H1 (cell line): ENCODE measurements at regions of chr4 and their contacts with region 1.

Region 1: DNA sequence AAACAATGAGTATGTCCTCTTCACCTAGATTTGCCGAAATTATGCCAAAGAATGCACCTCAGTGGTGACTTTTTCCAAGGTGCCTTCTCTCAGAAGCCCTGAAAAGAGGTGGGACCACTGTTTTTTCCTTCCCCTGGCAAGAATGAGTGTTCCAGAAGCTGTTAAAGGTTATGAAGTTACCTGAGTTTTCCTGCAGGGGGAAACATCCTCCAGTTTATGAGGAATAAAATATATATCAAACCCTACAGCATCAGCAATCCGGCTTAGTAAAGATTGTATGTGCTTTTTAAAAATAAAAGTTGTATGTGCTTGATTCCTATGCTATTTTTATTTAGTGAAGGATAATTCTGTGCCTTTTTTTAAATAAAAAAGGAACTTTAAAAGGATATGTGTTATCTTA is 73.3 kb downstream of the RBM46 start:
- DNase-seq: no peak
- H3K4me3 ChIP-seq: no peak overlapping the region
- H3K27ac ChIP-seq: no peak overlapping the region
- H3K4me1 ChIP-seq: no peaks in the 10 kb centered on the region
- H3K27me3 ChIP-seq: no peaks in the 10 kb centered on the region
- CTCF ChIP-seq: peak in 2 of 3 experiments; percentile 37 to 55; a peak in 2 of 4 replicates
- EP300 ChIP-seq: no peak
- POLR2A ChIP-seq: no peak
- RAD21 ChIP-seq: peak; percentile 59 to 60

Region 2: GRCh38 chr4:154838694-154839093 is 15.7 kb before region 1 on chr4:
- CTCF ChIA-PET with region 1: interaction called, 13 read pairs
- POLR2A ChIA-PET with region 1: no interaction called
- DNase-seq: no peak
- H3K4me3 ChIP-seq: no peak overlapping the region
- H3K27ac ChIP-seq: no peak overlapping the region
- H3K4me1 ChIP-seq: peaks cover 0 to 4% (median 2%) of the 10 kb centered on the region in 4 experiments; a peak in 3 of 7 replicates
- H3K27me3 ChIP-seq: no peaks in the 10 kb centered on the region
- CTCF ChIP-seq: no peak
- EP300 ChIP-seq: no peak
- POLR2A ChIP-seq: no peak
- RAD21 ChIP-seq: no peak

Region 3: DNA sequence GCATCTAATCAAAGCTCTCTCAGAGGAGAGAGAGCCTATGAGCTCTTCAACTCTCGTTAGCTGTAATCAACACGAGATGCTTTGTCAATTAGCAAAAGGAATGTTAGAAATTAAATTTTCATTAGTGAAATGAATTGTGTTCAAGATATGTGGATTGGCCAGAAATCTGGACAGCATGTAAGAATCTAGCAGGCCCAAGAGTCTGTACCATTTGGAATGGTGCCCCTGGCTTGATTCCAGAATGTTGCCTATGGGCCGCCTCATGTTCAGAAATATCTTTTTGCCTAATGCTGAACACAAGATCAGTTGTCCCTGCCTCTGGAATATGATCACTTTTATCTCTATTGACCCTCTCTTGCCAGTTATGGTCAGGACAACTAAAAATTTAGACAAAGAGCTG is 14.9 kb after region 1 on chr4:
- CTCF ChIA-PET with region 1: interaction called, 27 read pairs
- POLR2A ChIA-PET with region 1: no interaction called
- DNase-seq: no peak
- H3K4me3 ChIP-seq: no peak overlapping the region
- H3K27ac ChIP-seq: no peak overlapping the region
- H3K4me1 ChIP-seq: peaks cover 0 to 7% (median 4%) of the 10 kb centered on the region in 4 experiments; a peak in 5 of 7 replicates
- H3K27me3 ChIP-seq: no peaks in the 10 kb centered on the region
- CTCF ChIP-seq: no peak
- EP300 ChIP-seq: no peak
- POLR2A ChIP-seq: no peak
- RAD21 ChIP-seq: no peak

Region 4: GRCh38 chr4:154911097-154911496 is 56.7 kb after region 1 on chr4:
- CTCF ChIA-PET with region 1: interaction called, 33 read pairs
- POLR2A ChIA-PET with region 1: no interaction called
- DNase-seq: no peak
- H3K4me3 ChIP-seq: no peak overlapping the region
- H3K27ac ChIP-seq: no peak overlapping the region
- H3K4me1 ChIP-seq: peaks cover 1 to 11% (median 4%) of the 10 kb centered on the region in 4 experiments; a peak in 4 of 7 replicates
- H3K27me3 ChIP-seq: no peaks in the 10 kb centered on the region
- CTCF ChIP-seq: peak in 2 of 3 experiments; percentile 52 to 56; a peak in 3 of 4 replicates
- EP300 ChIP-seq: no peak
- POLR2A ChIP-seq: no peak
- RAD21 ChIP-seq: peak; percentile 55 to 67